ENCODE measurements at regions of chr15 and their contacts with region 1.

Region 1: DNA sequence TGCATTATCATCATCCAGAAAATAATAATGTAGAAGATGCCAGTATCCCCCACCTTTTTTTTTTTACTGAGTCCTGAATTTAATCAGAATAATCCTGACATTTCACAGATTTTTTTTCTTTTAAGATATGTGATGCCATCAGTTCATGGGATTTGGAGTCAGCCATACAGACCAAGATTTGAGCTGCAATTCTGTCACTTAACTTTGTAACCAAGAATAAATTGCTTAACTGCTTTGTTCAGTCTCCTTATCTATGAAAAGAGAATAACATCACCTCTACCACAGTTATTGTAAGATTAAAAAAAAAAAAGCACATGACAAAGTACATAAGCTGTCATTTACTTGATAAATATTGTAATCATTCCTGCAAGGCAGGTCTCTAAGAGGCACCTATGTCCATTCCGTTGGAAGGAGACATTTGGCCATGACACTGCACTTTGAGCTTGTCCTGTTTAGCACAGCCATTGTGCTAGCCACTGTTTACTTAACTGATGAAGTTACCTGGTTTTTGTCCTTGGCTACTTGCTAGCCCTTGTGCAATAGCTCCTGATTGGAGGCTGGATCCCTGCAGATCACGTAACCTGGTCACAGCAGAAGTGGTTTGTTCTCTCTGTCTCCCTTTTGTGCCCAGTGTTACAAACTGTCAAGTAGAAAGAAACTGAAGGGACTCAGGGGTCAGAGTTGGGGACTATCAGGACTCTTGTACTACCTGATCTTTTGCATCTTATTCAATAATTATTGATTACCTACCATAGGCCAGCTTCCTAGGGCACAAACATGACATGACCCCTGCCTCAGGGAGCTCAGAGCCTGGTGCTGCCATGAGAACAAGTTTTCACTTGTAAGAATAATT is 306.0 kb downstream of the WDR72 start:
- DNase-seq: peak; percentile 27
- H3K4me3 Mint-ChIP-seq: no peak overlapping the region
- H3K27ac Mint-ChIP-seq: peak overlapping the region; percentile 60
- H3K4me1 Mint-ChIP-seq: peaks cover 34% of the 10 kb centered on the region
- H3K27me3 Mint-ChIP-seq: no peaks in the 10 kb centered on the region
- CTCF ChIP-seq: no peak

Region 2: DNA sequence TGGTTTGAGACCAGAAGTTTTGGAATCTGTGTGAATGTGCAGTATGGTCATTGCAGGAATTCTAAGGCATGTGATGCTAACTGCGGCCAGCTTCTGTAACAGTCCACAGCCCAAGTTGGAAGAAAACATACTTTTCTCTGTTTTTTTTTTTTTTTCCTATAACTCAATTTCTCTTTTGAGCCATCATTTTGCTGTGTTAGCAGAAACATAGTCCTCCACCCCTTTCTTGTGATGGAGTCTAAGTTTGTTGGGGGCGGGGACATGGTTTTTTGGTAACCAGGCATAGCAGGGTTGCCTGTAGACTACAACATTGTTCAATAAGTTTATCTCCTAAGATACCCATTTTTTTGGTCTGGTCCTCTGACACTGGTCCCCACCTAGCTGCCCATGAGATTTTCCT is 440.1 kb before region 1 on chr15:
- CTCF ChIA-PET with region 1: no interaction called
- intact Hi-C with region 1: no loop called
- DNase-seq: no peak
- H3K4me3 Mint-ChIP-seq: no peak overlapping the region
- H3K27ac Mint-ChIP-seq: no peak overlapping the region
- H3K4me1 Mint-ChIP-seq: no peaks in the 10 kb centered on the region
- H3K27me3 Mint-ChIP-seq: peaks cover 26% of the 10 kb centered on the region
- CTCF ChIP-seq: no peak

Region 3: GRCh38 chr15:53230473-53230872 is 223.0 kb before region 1 on chr15:
- CTCF ChIA-PET with region 1: no interaction called
- intact Hi-C with region 1: no loop called
- DNase-seq: no peak
- H3K4me3 Mint-ChIP-seq: no peak overlapping the region
- H3K27ac Mint-ChIP-seq: no peak overlapping the region
- H3K4me1 Mint-ChIP-seq: no peaks in the 10 kb centered on the region
- H3K27me3 Mint-ChIP-seq: no peaks in the 10 kb centered on the region
- CTCF ChIP-seq: no peak

Region 4: GRCh38 chr15:53323191-53323590 is 130.3 kb before region 1 on chr15:
- CTCF ChIA-PET with region 1: no interaction called
- intact Hi-C with region 1: loop called (anchors 2 kb)
- DNase-seq: peak; percentile 74
- H3K4me3 Mint-ChIP-seq: no peak overlapping the region
- H3K27ac Mint-ChIP-seq: peak overlapping the region; percentile 14
- H3K4me1 Mint-ChIP-seq: peaks cover 14% of the 10 kb centered on the region
- H3K27me3 Mint-ChIP-seq: no peaks in the 10 kb centered on the region
- CTCF ChIP-seq: no peak

Region 5: DNA sequence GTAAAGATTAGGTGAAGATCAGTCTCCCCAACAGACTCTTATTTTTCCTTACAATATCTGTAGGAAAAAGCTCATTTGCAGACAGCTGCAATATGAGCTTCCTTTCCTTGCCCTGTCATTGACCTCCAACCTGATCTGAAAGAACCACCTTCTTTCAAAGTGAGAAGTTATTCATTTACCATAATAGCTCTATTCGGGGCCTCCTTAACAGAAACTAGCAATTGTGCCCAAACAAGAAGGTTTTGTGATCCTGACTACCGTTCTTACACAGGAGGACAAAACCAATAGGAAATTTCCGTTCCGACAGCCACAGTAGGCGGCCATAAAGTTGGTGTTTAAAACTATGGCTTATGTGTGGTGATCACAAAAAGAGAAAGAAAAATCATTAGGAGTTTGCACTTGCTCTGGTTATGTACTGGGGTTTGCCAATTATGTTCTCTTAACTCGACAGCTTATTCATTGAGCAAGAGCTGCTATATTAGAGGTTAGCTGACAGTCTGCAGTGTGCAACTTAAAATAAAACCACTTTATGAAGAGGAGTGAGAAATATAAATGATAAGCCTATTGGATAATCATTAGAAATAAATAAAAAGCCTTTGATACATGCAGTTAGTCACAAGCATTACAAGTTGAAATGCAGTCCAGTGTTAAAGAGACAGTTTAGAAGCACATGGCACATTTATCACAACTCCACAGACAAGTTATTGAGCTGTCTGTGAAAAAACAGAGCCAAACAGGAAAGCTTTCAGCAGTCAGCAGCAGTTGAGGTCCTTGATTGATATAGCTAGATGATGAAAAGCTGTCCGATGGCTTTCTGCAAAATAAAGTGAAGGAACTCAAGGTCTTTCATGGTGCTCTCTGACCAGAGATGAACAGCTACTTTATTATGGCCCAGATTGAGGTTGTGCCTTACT is 106.1 kb after region 1 on chr15:
- CTCF ChIA-PET with region 1: no interaction called
- intact Hi-C with region 1: loop called (anchors 5 kb)
- DNase-seq: peak; percentile 37
- H3K4me3 Mint-ChIP-seq: peak overlapping the region; percentile 53
- H3K27ac Mint-ChIP-seq: peak overlapping the region; percentile 92
- H3K4me1 Mint-ChIP-seq: peaks cover 34% of the 10 kb centered on the region
- H3K27me3 Mint-ChIP-seq: no peaks in the 10 kb centered on the region
- CTCF ChIP-seq: no peak

Region 6: DNA sequence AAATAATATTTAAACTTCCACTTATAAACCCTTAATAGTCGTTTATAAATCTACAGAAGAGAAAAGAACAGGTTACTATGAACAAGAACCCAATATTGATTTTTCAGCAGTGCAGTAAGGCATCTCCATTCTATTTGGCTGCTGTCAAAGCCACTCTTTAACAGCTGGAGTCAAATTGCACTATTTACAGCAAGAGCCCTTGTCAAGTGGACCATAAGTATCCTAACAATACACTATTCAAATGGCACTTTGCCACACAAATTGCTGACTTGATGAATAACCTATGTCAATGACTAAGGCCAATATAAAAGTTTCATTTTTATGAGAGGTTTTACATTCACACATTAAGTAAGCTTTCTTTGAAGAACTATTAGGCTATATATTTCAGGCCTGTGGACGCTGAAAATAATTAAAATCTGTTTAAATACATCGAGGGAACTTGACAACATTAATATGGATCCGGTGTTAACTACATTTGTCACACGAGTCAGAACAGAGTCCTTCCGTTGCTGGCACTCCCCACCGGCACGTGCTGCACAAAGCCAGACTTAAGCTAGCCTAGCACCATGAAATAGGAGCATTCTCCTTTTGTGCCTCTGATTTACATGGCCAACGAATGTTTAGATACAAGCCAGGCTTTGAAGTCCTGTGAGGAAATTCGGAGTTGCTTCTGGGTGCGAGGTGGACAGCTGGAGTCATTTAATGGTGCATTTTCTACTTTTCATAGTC is 205.5 kb after region 1 on chr15:
- CTCF ChIA-PET with region 1: no interaction called
- intact Hi-C with region 1: loop called (anchors 10 kb)
- DNase-seq: no peak
- H3K4me3 Mint-ChIP-seq: no peak overlapping the region
- H3K27ac Mint-ChIP-seq: no peak overlapping the region
- H3K4me1 Mint-ChIP-seq: peaks cover 8% of the 10 kb centered on the region
- H3K27me3 Mint-ChIP-seq: no peaks in the 10 kb centered on the region
- CTCF ChIP-seq: no peak

Measured in Calu3 (cell line).